Thyroid gland (tissue), 4 donors: ENCODE measurements at regions of chr11 and their contacts with region 1.

Region 1: GRCh38 chr11:44036811-44037657 is 10.7 kb upstream of the ACCSL start:
- DNase-seq: peak; percentile 56 to 57
- H3K4me3 ChIP-seq: no peak overlapping the region
- H3K27ac ChIP-seq: peak overlapping the region in 1 of 3 donors; percentile 12
- H3K4me1 ChIP-seq: peaks cover 0 to 11% of the 10 kb centered on the region in 2 donors
- H3K27me3 ChIP-seq: no peaks in the 10 kb centered on the region
- CTCF ChIP-seq: peak in 5 of 6 experiments; percentile 29 to 59 (median 45)
- POLR2A ChIP-seq: no peak

Region 2: DNA sequence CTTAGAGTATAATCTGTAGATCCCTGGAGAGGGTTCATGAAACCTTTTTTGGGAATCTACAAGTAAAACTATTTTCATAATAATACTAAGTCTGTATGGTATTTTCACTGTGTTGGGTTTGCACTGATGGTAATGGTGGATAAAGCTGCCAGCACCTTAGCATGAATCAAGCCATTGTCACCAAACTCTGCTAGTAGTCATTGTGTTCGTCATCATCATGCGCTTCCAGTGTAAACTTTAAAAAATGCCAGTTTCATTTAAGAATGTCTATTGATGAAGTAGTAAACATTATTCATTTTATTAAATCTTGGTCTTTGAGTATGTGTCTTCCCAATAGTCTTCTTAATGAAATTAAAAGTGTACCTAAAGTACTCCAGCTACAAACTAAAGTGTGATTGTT is 141.4 kb before region 1 on chr11:
- intact Hi-C with region 1: loop called (anchors 10 kb)
- DNase-seq: no peak
- H3K4me3 ChIP-seq: no peak overlapping the region
- H3K27ac ChIP-seq: no peak overlapping the region
- H3K4me1 ChIP-seq: no peaks in the 10 kb centered on the region
- H3K27me3 ChIP-seq: no peaks in the 10 kb centered on the region
- CTCF ChIP-seq: no peak
- POLR2A ChIP-seq: no peak